ENCODE measurements at regions of chr21 and their contacts with region 1.

Region 1: DNA sequence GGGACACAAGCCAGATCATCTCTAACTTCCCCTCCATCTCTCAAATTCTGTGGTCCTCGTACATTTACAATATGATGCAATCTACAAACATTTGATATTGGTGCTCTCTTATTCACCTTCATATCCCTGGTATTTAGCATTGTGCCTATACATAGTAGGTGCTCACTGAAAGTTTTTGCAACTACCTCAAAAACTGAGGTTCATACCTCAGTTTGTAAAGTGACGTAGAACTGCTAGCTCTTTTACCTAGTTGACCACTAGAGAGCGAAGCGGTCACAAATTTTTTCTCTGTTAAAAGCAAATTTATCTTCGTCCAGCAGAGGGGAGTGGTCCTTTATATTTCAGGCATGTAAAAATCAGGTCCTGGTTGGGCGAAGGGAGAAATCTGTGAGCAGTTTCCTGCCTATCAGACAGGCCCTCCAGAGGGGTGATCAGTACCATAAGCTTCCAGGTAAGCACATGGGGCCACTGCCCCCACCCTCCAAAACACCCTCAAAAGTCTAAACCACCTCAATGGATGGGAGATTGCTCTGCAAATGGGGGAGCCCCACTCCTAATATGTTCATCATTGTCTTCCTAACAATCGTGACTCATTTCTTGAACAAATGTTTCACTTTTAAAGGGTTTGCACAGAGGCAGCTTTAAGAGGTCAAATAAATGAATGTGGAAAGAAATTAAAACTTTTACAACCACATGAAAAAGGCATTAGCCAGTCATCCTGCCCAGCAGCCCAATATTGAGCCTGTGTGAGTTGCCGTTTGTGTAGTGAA is 10.6 kb upstream of the HLCS start:
- DNase-seq: peak; percentile 48
- H3K4me3 Mint-ChIP-seq: no peak overlapping the region
- H3K27ac Mint-ChIP-seq: no peak overlapping the region
- H3K4me1 Mint-ChIP-seq: peaks cover 8% of the 10 kb centered on the region
- H3K27me3 Mint-ChIP-seq: no peaks in the 10 kb centered on the region
- CTCF ChIP-seq: peak; percentile 30

Region 2: DNA sequence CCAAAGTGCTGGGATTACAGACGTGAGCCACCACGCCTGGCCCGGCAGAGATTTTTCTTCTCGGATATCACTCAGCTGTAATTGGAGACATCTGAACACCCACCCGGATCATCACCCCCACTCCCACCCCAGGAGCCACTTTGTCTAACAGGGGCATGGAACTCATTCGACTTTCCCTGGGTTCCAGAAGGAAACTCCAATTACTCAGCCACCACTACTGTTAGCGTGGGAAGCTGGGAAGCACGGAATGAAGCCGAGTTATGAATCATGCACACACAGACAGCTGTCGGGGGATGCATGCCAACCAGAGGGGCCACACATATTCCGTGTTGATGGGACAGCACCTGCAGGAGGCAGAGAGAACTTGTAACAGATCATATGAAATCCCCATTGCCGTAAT is 95.8 kb before region 1 on chr21:
- CTCF ChIA-PET with region 1: no interaction called
- intact Hi-C with region 1: no loop called
- DNase-seq: no peak
- H3K4me3 Mint-ChIP-seq: no peak overlapping the region
- H3K27ac Mint-ChIP-seq: no peak overlapping the region
- H3K4me1 Mint-ChIP-seq: no peaks in the 10 kb centered on the region
- H3K27me3 Mint-ChIP-seq: no peaks in the 10 kb centered on the region
- CTCF ChIP-seq: no peak

Region 3: GRCh38 chr21:36902796-36903195 is 74.3 kb before region 1 on chr21:
- CTCF ChIA-PET with region 1: no interaction called
- intact Hi-C with region 1: no loop called
- DNase-seq: no peak
- H3K4me3 Mint-ChIP-seq: no peak overlapping the region
- H3K27ac Mint-ChIP-seq: no peak overlapping the region
- H3K4me1 Mint-ChIP-seq: no peaks in the 10 kb centered on the region
- H3K27me3 Mint-ChIP-seq: no peaks in the 10 kb centered on the region
- CTCF ChIP-seq: no peak

Region 4: DNA sequence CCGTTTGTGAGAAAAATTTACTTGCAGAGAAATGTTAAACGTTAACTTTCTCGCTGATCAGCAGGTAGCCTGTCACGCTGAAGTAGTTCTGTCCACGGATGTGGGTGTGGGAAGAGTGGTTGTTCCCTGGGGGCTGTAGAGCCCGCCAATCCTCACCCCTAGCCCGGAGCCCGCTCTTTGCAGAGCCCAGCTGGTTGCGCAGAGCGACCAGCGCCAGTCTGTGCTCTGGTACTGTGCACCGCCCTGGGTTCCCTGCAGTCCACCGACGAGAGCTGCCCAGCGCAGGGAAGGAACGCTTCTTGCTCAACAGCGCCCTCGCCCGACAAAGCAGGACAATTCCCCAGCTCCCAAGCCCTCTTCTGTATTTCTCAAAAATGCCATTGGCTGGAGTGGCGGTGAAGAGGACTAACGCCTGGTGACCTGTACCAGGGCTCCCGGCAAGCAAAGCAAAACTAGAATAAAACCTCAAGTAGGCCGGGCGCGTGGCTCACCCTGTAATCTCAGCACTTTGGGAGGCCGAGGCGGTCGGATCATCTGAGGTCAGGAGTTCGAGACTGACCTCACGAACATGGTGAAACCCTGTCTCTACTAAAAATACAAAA is 32.8 kb after region 1 on chr21:
- CTCF ChIA-PET with region 1: interaction called, 14 read pairs
- intact Hi-C with region 1: no loop called
- DNase-seq: peak; percentile 85
- H3K4me3 Mint-ChIP-seq: peak overlapping the region; percentile 52
- H3K27ac Mint-ChIP-seq: no peak overlapping the region
- H3K4me1 Mint-ChIP-seq: no peaks in the 10 kb centered on the region
- H3K27me3 Mint-ChIP-seq: no peaks in the 10 kb centered on the region
- CTCF ChIP-seq: peak; percentile 55

Region 5: GRCh38 chr21:37079211-37079824 is 102.3 kb after region 1 on chr21:
- CTCF ChIA-PET with region 1: no interaction called
- intact Hi-C with region 1: loop called (anchors 5 kb)
- DNase-seq: no peak
- H3K4me3 Mint-ChIP-seq: no peak overlapping the region
- H3K27ac Mint-ChIP-seq: no peak overlapping the region
- H3K4me1 Mint-ChIP-seq: peaks cover 24% of the 10 kb centered on the region
- H3K27me3 Mint-ChIP-seq: no peaks in the 10 kb centered on the region
- CTCF ChIP-seq: no peak

Measured in Calu3 (cell line).